ENCODE measurements at regions of chr10 and their contacts with region 1.

Region 1: GRCh38 chr10:114103284-114103683 is 59.6 kb downstream of the ADRB1 start:
- H3K4me3 Mint-ChIP-seq: no peak overlapping the region
- H3K27ac Mint-ChIP-seq: no peak overlapping the region
- H3K4me1 Mint-ChIP-seq: peaks cover 31% of the 10 kb centered on the region
- H3K27me3 Mint-ChIP-seq: peaks cover 42% of the 10 kb centered on the region

Region 2: DNA sequence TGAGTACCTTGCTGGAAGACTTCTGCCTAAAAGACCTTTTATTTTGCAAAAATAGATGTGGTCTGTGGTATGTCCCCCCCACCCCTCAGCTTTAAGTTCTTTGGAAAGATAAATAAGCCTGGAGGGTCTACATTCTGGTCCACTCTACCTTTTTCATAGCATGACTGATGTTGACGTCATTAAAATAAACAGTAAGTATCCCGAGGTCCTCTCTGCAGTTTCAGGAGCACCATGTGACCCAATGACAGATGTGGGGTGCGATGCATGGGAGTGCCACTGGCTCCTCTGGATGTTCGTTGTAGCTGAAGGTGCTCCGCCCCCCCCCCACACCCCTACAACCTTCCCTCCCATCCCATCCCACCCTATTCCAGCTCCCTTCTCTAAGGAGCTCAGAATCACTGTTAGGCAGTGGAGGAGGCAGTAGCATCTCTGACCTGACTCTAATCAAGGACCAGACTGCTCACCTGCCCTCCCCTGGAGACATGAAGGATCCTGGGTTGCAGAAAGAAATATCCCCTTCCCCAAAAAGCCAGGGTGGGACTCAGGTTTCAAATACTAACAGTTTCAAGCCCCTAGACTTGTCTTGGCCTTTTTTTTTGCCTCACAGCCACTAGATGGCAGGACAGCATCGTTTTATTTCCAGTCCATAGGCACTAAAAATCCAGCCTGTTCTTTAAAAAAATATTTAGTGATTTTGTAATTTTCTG is 398.5 kb before region 1 on chr10:
- intact Hi-C with region 1: loop called (anchors 5 kb)
- H3K4me3 Mint-ChIP-seq: no peak overlapping the region
- H3K27ac Mint-ChIP-seq: no peak overlapping the region
- H3K4me1 Mint-ChIP-seq: peaks cover 11% of the 10 kb centered on the region
- H3K27me3 Mint-ChIP-seq: no peaks in the 10 kb centered on the region

Region 3: GRCh38 chr10:113802997-113803396 is 300.3 kb before region 1 on chr10:
- intact Hi-C with region 1: loop called (anchors 1 kb)
- H3K4me3 Mint-ChIP-seq: no peak overlapping the region
- H3K27ac Mint-ChIP-seq: no peak overlapping the region
- H3K4me1 Mint-ChIP-seq: peaks cover 7% of the 10 kb centered on the region
- H3K27me3 Mint-ChIP-seq: peaks cover 6% of the 10 kb centered on the region

Region 4: DNA sequence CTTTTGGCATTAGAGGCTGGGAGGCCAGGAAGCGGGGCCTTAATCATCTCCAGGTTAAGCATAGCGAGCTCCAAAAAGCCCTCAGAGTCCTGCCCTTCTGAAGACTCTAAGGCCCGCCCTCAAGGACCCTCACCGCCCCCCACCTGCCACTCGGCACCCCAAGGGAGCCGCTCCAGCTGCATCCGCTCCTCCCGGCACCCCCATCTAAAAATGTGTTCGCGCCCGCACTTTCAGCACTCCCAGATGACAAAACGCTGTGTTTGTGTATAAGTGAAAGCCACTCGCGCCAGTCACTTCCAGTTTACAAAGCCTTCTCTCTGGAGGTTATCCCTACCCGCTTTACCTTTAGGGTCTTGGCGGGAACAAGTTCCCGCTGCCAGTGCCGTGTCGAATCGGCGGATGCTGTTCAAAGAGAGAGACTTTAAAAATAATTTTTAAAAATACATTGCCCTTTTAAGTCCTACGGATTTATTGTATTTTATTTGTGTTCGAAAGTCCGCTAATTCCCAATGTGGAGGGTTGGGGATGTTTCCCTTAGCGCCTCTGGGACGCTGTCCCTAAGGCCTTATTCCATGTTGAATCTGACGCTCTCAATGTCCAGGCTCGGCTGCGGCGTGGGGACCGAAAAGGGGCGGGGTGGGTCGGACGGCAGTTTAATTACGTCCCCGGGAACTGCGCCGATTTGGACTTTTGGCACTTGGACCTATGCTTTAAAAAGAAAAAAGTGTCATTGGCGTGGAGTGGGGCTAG is 249.1 kb before region 1 on chr10 and contains the starts of genes DCLRE1A and NHLRC2:
- intact Hi-C with region 1: loop called (anchors 5 kb)
- H3K4me3 Mint-ChIP-seq: peak within 1 kb of the TSS; percentile 95
- H3K27ac Mint-ChIP-seq: peak within 1 kb of the TSS; percentile 98
- H3K4me1 Mint-ChIP-seq: peaks cover 15% of the 10 kb centered on the region
- H3K27me3 Mint-ChIP-seq: no peaks in the 10 kb centered on the region

Region 5: DNA sequence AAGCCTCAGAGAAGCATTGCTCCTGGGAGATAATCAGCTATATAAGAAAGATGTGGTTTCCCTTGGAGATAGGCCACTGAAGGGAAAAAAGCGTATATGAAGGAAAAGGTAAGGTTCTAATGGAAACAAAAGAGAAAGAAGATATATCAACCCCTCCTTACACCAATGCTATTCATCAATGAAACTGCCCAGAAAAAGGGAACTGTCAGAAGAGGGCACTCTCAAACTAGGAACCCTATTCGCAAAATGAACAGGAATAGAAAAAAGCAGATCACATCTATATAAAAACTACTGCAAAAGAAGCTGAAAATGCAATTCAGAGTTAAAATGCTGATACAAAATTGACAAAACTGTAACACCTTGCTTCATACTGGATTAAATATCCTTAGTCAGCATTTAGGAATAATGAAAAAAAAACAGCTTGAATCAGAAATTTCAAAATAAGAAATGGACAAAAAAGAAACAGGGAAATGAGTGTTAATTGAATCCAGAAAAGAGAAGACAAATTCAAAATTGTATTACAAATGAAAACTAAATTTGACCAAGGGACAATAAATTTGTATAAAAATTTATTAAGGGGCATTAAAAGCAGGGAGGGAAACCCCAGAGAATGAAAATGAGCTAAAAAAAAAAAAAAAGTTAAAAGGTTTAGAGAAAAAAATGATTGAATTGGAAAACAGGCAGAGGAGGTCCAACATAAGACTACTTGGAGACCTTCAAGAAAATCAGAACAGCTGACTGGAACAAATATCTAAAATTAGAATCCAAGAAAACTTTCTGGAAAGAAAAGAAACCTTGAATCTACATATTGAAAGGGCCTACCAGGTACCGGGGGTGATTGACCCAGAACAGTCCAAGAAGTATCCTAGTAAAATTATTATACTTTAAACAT is 230.9 kb before region 1 on chr10:
- intact Hi-C with region 1: loop called (anchors 1 kb)
- H3K4me3 Mint-ChIP-seq: no peak overlapping the region
- H3K27ac Mint-ChIP-seq: no peak overlapping the region
- H3K4me1 Mint-ChIP-seq: peaks cover 23% of the 10 kb centered on the region
- H3K27me3 Mint-ChIP-seq: no peaks in the 10 kb centered on the region

Region 6: GRCh38 chr10:113927344-113927831 is 175.9 kb before region 1 on chr10:
- intact Hi-C with region 1: loop called (anchors 5 kb)
- H3K4me3 Mint-ChIP-seq: no peak overlapping the region
- H3K27ac Mint-ChIP-seq: no peak overlapping the region
- H3K4me1 Mint-ChIP-seq: peaks cover 8% of the 10 kb centered on the region
- H3K27me3 Mint-ChIP-seq: peaks cover 10% of the 10 kb centered on the region

Region 7: GRCh38 chr10:114173921-114174694 is 70.8 kb after region 1 on chr10 and contains the start of gene CCDC186:
- intact Hi-C with region 1: no loop called
- H3K4me3 Mint-ChIP-seq: peak within 1 kb of the TSS; percentile 98
- H3K27ac Mint-ChIP-seq: peak within 1 kb of the TSS; percentile 99
- H3K4me1 Mint-ChIP-seq: peaks cover 18% of the 10 kb centered on the region
- H3K27me3 Mint-ChIP-seq: peaks cover 3% of the 10 kb centered on the region

Region 8: DNA sequence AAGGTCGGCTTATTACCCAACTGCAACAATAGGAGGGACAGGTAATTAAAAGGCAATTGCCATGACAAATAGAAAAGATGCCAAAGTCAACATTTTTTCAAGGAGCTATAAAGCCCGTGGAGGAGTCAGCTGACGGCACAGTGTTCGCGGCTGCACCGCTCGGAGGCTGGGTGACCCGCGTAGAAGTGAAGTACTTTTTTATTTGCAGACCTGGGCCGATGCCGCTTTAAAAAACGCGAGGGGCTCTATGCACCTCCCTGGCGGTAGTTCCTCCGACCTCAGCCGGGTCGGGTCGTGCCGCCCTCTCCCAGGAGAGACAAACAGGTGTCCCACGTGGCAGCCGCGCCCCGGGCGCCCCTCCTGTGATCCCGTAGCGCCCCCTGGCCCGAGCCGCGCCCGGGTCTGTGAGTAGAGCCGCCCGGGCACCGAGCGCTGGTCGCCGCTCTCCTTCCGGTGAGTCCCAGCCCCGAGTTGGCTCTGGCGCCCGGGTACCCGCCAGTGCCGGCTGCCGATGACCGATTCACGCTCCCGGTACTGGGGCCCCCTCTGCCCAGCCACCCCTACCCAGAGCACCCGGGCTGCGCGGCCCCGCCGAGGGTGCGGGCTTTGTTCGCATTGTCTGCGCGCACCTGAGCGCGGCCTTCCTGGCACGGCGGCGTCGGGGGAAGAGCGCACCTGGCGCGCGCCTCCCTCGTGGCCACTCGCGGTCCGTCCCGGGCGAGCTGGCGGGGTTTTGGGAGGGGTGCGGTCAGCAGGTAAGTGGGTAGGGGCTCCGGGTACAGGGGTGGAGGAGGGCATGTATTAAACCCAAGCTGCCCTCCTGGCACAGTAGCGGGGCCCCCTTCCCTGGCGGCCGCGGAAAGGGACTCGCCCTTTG is 136.1 kb after region 1 on chr10 and contains the start of gene VWA2:
- intact Hi-C with region 1: no loop called
- H3K4me3 Mint-ChIP-seq: no peak within 1 kb of the TSS
- H3K27ac Mint-ChIP-seq: no peak within 1 kb of the TSS
- H3K4me1 Mint-ChIP-seq: no peaks in the 10 kb centered on the region
- H3K27me3 Mint-ChIP-seq: peaks cover 66% of the 10 kb centered on the region